Activated CD8-positive, alpha-beta memory T cell treated with anti-CD3 and anti-CD28 coated beads, Interleukin-2, amount 10 ng/mL, durations not matched to agents 7 days and 5 days (primary cell): ENCODE measurements at regions of chr2 and their contacts with region 1.

Region 1: DNA sequence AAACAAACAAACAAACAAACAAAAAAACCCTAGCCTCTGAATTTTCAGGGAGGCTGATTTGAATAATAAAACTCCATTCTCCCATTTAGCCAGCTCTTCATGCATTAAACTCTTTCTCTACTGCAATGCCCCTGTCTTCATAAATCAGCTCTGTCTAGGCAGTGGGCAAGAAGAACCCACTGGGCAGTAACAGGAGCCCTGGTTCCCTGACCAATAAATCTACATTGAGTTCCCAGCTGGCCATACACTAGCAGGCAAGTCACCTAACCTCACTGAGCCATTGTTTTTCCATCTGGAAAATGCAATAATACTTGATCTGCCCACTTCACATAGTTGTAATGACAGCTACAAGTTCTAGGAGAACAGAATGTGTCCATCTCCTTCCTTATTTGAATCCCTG is 57.6 kb upstream of the YPEL5 start:
- DNase-seq: no peak
- ATAC-seq: no peak
- H3K4me3 Mint-ChIP-seq: no peak overlapping the region
- H3K27ac Mint-ChIP-seq: no peak overlapping the region
- H3K4me1 Mint-ChIP-seq: no peaks in the 10 kb centered on the region
- H3K27me3 Mint-ChIP-seq: peaks cover 55% of the 10 kb centered on the region

Region 2: GRCh38 chr2:30003128-30003527 is 86.0 kb before region 1 on chr2:
- CTCF ChIA-PET with region 1: no interaction called
- DNase-seq: no peak
- ATAC-seq: no peak
- H3K4me3 Mint-ChIP-seq: no peak overlapping the region
- H3K27ac Mint-ChIP-seq: no peak overlapping the region
- H3K4me1 Mint-ChIP-seq: no peaks in the 10 kb centered on the region
- H3K27me3 Mint-ChIP-seq: peaks cover 7% of the 10 kb centered on the region

Region 3: GRCh38 chr2:30115141-30115980 is 26.2 kb after region 1 on chr2:
- CTCF ChIA-PET with region 1: interaction called, 34 read pairs
- DNase-seq: peak; percentile 76
- ATAC-seq: peak; percentile 66
- H3K4me3 Mint-ChIP-seq: no peak overlapping the region
- H3K27ac Mint-ChIP-seq: no peak overlapping the region
- H3K4me1 Mint-ChIP-seq: peaks cover 5% of the 10 kb centered on the region
- H3K27me3 Mint-ChIP-seq: peaks cover under 1% of the 10 kb centered on the region

Region 4: GRCh38 chr2:30155889-30156658 is 66.9 kb after region 1 on chr2:
- CTCF ChIA-PET with region 1: no interaction called
- DNase-seq: no peak
- ATAC-seq: no peak
- H3K4me3 Mint-ChIP-seq: no peak overlapping the region
- H3K27ac Mint-ChIP-seq: no peak overlapping the region
- H3K4me1 Mint-ChIP-seq: peaks cover 8% of the 10 kb centered on the region
- H3K27me3 Mint-ChIP-seq: no peaks in the 10 kb centered on the region